Endothelial cell of umbilical vein (primary cell): ENCODE measurements at regions of chr2 and their contacts with region 1.

Region 1: DNA sequence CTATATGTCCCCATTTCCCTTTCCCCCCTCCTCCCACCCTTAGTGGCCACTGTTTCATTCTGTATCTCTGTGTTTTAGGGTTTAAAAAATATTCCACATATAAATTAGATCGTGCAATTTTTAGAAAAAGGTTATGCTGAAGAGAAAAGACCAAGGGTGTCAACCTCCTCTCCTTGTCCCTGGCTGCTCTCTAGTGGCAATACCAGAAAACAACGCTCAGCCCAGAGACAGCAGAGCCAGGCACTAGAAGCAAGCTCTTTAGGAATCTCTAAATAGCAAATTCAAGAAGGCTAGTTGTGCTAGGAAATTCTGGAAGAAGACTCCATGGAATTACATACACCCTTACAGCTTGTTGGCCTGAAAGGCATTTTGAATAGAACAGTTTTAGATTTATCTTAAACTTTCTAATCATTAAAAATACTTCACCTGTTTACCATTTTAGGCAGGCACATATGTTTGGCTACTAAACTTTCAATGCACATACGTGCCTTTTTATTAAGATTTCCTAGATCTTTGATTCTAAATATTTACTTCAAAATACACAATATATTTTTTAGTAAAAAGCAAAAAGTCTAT is 35.1 kb upstream of the RASGRP3 start:
- DNase-seq: peak; percentile 79
- H3K4me3 ChIP-seq: no peak overlapping the region
- H3K27ac ChIP-seq: no peak overlapping the region
- H3K4me1 ChIP-seq: peaks cover 19% of the 10 kb centered on the region
- H3K27me3 ChIP-seq: no peaks in the 10 kb centered on the region
- CTCF ChIP-seq: peak; percentile 74
- POLR2A ChIP-seq: no peak

Region 2: DNA sequence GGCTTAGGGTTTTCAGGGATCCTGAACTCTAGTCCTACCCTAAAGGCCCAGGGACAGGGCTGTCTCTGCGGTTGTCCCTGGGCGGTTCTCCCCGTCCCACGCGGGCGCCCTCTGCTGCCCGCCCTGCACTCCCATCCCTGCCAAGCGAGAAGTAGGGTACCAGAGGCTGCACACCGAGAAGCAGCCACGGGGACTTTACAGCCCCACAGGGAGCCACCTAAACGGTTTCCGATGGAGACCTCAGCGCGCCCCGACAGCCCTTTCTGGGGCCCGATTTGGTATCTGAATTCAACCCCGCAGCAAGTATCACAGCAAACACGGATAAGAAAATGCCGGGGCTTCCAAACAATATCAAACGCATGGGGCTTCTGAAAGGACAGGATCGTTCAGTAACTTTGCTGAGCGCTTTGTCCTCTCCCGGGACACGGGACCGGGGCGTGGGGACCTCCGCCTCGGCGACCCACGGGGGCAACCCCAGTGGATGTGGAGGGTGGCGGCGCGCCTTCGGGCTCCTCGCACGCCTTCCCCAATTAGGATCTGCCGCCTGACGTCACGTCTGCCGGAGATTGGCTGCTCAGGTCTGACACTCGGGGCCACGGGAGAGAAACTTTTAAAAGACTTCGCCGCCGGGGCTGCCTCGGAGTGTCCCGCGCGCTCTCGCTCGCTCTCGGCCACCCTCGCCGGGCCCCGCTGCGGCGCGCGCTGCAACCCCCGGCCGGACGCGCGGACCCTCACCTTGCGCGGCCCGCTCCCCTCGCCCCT is 494.8 kb before region 1 on chr2 and contains the start of gene LTBP1:
- CTCF ChIA-PET with region 1: interaction called, 3 read pairs
- POLR2A ChIA-PET with region 1: no interaction called
- dilution Hi-C with region 1: no loop called
- intact Hi-C with region 1: loop called (anchors 1 kb)
- DNase-seq: peak; percentile 77
- H3K4me3 ChIP-seq: peak within 1 kb of the TSS; percentile 50 to 86 (median 55)
- H3K27ac ChIP-seq: peak within 1 kb of the TSS; percentile 58
- H3K4me1 ChIP-seq: peaks cover 10% of the 10 kb centered on the region
- H3K27me3 ChIP-seq: no peaks in the 10 kb centered on the region
- CTCF ChIP-seq: peak; percentile 88 to 90
- POLR2A ChIP-seq: peak; percentile 14
- total RNA-seq, gene LTBP1: 68.2 and 107 TPM in 2 replicates

Region 3: DNA sequence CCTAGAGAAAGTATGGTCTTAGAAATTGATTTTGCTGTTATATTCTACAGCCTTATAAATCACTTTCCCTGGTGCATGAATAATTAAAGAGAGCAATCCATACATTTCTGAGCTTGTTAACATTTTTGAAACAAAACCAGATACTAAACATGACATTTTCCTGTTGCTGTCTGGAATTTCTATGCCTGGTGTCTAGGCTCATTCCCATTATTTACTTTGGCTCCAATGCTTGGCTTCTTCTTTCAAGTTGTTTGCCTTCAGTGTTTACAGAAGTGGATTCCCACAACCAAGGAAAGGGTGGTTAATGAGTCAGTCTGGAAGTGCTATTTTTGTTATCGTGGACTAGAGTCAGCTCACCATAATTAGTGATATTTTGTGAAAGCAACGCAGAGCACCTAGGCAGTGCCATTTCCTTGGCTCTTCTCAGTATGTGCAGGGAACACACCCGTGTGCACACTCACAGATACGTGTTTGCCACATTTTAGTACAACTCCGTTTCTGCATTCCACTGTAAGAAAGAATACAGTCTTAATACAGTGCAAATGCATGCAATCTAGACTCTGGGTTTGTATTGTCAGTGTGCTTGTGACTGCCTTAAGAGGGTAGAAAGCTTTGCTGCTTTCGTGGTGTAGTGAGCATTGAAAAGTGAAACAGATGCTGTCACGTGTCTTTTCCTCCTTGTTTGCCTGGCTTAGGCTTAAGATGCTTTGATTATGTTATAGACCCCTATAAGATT is 149.9 kb before region 1 on chr2:
- CTCF ChIA-PET with region 1: interaction called, 6 read pairs
- POLR2A ChIA-PET with region 1: no interaction called
- dilution Hi-C with region 1: no loop called
- intact Hi-C with region 1: loop called (anchors 5 kb)
- DNase-seq: peak; percentile 99
- H3K4me3 ChIP-seq: peak overlapping the region in 2 of 3 experiments; percentile 20 to 29
- H3K27ac ChIP-seq: peak overlapping the region; percentile 92
- H3K4me1 ChIP-seq: peaks cover 40% of the 10 kb centered on the region
- H3K27me3 ChIP-seq: no peaks in the 10 kb centered on the region
- CTCF ChIP-seq: no peak
- POLR2A ChIP-seq: no peak

Region 4: DNA sequence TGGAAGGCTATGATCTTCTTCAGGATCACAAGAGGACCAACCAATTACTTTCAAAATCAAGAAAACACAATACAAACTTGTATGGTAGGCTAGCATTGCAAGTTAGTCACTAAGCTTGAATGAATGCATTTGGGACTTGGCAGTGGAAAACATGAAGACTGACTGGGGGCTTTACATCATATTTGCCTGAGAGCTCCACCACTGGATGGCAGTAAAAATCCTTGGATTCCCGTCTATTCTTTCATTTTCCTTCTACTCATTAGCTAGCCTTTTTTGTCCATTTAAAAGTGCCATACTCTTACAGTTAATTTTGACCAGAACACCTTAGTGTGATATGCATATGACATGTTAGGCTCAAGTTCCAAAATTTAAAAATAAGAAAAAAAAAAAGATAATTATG is 28.4 kb before region 1 on chr2:
- CTCF ChIA-PET with region 1: interaction called, 154 read pairs
- POLR2A ChIA-PET with region 1: no interaction called
- dilution Hi-C with region 1: no loop called
- intact Hi-C with region 1: loop called (anchors 1 kb)
- DNase-seq: peak; percentile 82
- H3K4me3 ChIP-seq: no peak overlapping the region
- H3K27ac ChIP-seq: no peak overlapping the region
- H3K4me1 ChIP-seq: peaks cover 11% of the 10 kb centered on the region
- H3K27me3 ChIP-seq: no peaks in the 10 kb centered on the region
- CTCF ChIP-seq: peak; percentile 41 to 57
- POLR2A ChIP-seq: no peak

Region 5: GRCh38 chr2:33475224-33476130 is 34.2 kb after region 1 on chr2:
- CTCF ChIA-PET with region 1: interaction called, 10 read pairs
- POLR2A ChIA-PET with region 1: no interaction called
- dilution Hi-C with region 1: no loop called
- intact Hi-C with region 1: no loop called
- DNase-seq: peak; percentile 87
- H3K4me3 ChIP-seq: peak overlapping the region; percentile 35 to 63 (median 42)
- H3K27ac ChIP-seq: peak overlapping the region; percentile 82
- H3K4me1 ChIP-seq: peaks cover 23% of the 10 kb centered on the region
- H3K27me3 ChIP-seq: peaks cover 3 to 5% of the 10 kb centered on the region in 2 experiments
- CTCF ChIP-seq: peak; percentile 85 to 86
- POLR2A ChIP-seq: no peak